ENCODE measurements at regions of chr19 and their contacts with region 1.

Region 1: GRCh38 chr19:31002518-31003244 is 346.6 kb downstream of the TSHZ3 start:
- DNase-seq: no peak
- H3K4me3 ChIP-seq: no peak overlapping the region
- H3K27ac ChIP-seq: peak overlapping the region; percentile 88
- H3K4me1 ChIP-seq: peaks cover 12% of the 10 kb centered on the region
- H3K27me3 ChIP-seq: no peaks in the 10 kb centered on the region
- CTCF ChIP-seq: peak; percentile 33; the same call in 1 of the 2 replicates

Region 2: GRCh38 chr19:30590596-30591229 is 412.0 kb before region 1 on chr19:
- CTCF ChIA-PET with region 1: no interaction called
- POLR2A ChIA-PET with region 1: no interaction called
- intact Hi-C with region 1: no loop called
- DNase-seq: no peak
- H3K4me3 ChIP-seq: no peak overlapping the region
- H3K27ac ChIP-seq: no peak overlapping the region
- H3K4me1 ChIP-seq: no peaks in the 10 kb centered on the region
- H3K27me3 ChIP-seq: no peaks in the 10 kb centered on the region
- CTCF ChIP-seq: no peak

Region 3: GRCh38 chr19:30669329-30670010 is 333.2 kb before region 1 on chr19:
- CTCF ChIA-PET with region 1: no interaction called
- POLR2A ChIA-PET with region 1: no interaction called
- intact Hi-C with region 1: loop called (anchors 5 kb)
- DNase-seq: peak; percentile 88
- H3K4me3 ChIP-seq: peak overlapping the region; percentile 47
- H3K27ac ChIP-seq: peak overlapping the region; percentile 71
- H3K4me1 ChIP-seq: peaks cover 11% of the 10 kb centered on the region
- H3K27me3 ChIP-seq: no peaks in the 10 kb centered on the region
- CTCF ChIP-seq: peak; percentile 98

Region 4: GRCh38 chr19:30784850-30785457 is 217.7 kb before region 1 on chr19:
- CTCF ChIA-PET with region 1: no interaction called
- POLR2A ChIA-PET with region 1: no interaction called
- intact Hi-C with region 1: loop called (anchors 5 kb)
- DNase-seq: peak; percentile 79
- H3K4me3 ChIP-seq: no peak overlapping the region
- H3K27ac ChIP-seq: no peak overlapping the region
- H3K4me1 ChIP-seq: peaks cover 17% of the 10 kb centered on the region
- H3K27me3 ChIP-seq: no peaks in the 10 kb centered on the region
- CTCF ChIP-seq: peak; percentile 88

Region 5: DNA sequence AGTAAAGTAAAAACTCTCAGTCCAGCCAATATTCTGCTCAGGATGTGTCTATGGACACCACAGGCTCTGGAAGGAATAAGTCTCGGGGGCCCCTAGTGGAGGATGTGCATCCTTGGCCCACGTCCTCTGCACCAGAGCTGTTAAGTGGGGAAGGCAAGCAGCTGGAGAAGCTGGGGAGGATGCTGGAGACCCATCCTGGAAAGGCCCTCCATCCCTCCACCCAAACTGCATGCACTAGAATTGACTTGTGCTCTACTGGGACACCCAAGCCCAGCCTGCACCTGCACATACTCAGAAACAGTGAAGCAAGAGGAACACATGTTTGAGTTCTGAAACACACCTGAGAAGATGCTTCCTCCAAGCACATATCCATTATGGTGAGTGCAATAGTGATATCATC is 38.8 kb after region 1 on chr19:
- CTCF ChIA-PET with region 1: no interaction called
- POLR2A ChIA-PET with region 1: no interaction called
- intact Hi-C with region 1: no loop called
- DNase-seq: no peak
- H3K4me3 ChIP-seq: no peak overlapping the region
- H3K27ac ChIP-seq: no peak overlapping the region
- H3K4me1 ChIP-seq: no peaks in the 10 kb centered on the region
- H3K27me3 ChIP-seq: no peaks in the 10 kb centered on the region
- CTCF ChIP-seq: no peak

Region 6: GRCh38 chr19:31461814-31462539 is 459.3 kb after region 1 on chr19:
- CTCF ChIA-PET with region 1: interaction called, 11 read pairs
- POLR2A ChIA-PET with region 1: no interaction called
- intact Hi-C with region 1: no loop called
- DNase-seq: no peak
- H3K4me3 ChIP-seq: no peak overlapping the region
- H3K27ac ChIP-seq: no peak overlapping the region
- H3K4me1 ChIP-seq: no peaks in the 10 kb centered on the region
- H3K27me3 ChIP-seq: no peaks in the 10 kb centered on the region
- CTCF ChIP-seq: 0 out of 2 replicates have a peak, but pooled peaks have one; percentile 27

Region 7: GRCh38 chr19:32174386-32175113 is 1171.9 kb after region 1 on chr19:
- CTCF ChIA-PET with region 1: no interaction called
- POLR2A ChIA-PET with region 1: no interaction called
- intact Hi-C with region 1: loop called (anchors 10 kb)
- DNase-seq: peak; percentile 26
- H3K4me3 ChIP-seq: no peak overlapping the region
- H3K27ac ChIP-seq: no peak overlapping the region
- H3K4me1 ChIP-seq: no peaks in the 10 kb centered on the region
- H3K27me3 ChIP-seq: no peaks in the 10 kb centered on the region
- CTCF ChIP-seq: no peak

Measured in A673 (cell line).